A549 (cell line): ENCODE measurements at regions of chr9 and their contacts with region 1.

Region 1: GRCh38 chr9:74952281-74953151 is at the start of gene C9orf40:
- DNase-seq: peak; percentile 71 to 91
- ATAC-seq: peak; percentile 95 to 96
- H3K4me3 ChIP-seq: peak within 1 kb of the TSS; percentile 90
- H3K27ac ChIP-seq: peak within 1 kb of the TSS; percentile 92 to 95
- H3K4me1 ChIP-seq: 0 out of 3 replicates have a peak, but pooled peaks cover 4% of the 10 kb centered on the region
- CTCF ChIP-seq: peak; percentile 76
- EP300 ChIP-seq: no peak
- POLR2A ChIP-seq: peak; percentile 33
- RAD21 ChIP-seq: peak; percentile 34 to 52; a peak in 3 of 5 replicates
- polyA plus RNA-seq, gene C9orf40: 4.0 and 8.8 TPM in 2 replicates

Region 2: DNA sequence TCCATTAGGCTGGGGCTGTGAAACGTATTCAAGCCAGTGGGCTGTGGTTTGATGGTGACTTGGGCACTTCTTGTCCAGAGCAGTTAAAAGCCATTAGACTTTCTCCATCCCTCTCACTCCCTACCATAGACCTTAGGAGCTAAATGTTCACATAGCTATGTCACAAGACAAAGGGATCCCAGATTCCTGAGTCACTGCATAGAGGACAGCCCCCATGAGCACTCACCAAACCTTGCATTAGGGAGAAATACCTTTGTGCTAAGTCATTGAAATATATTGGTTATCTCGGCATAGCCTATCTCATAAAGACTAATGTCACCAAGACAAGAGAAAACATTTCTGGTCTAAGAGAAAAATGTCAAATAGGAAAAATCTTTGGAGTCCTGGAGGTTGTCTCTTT is 169.1 kb before region 1 on chr9:
- CTCF ChIA-PET with region 1: interaction called, 200 read pairs
- POLR2A ChIA-PET with region 1: interaction called, 6 read pairs
- DNase-seq: peak; percentile 48 to 53
- ATAC-seq: peak; percentile 89 to 95
- H3K4me3 ChIP-seq: no peak overlapping the region
- H3K27ac ChIP-seq: peak overlapping the region; percentile 36 to 44; a peak in 2 of 6 replicates
- H3K4me1 ChIP-seq: peaks cover 11% of the 10 kb centered on the region; the same call in 2 of the 3 replicates
- CTCF ChIP-seq: no peak
- EP300 ChIP-seq: no peak
- POLR2A ChIP-seq: no peak
- RAD21 ChIP-seq: no peak

Region 3: DNA sequence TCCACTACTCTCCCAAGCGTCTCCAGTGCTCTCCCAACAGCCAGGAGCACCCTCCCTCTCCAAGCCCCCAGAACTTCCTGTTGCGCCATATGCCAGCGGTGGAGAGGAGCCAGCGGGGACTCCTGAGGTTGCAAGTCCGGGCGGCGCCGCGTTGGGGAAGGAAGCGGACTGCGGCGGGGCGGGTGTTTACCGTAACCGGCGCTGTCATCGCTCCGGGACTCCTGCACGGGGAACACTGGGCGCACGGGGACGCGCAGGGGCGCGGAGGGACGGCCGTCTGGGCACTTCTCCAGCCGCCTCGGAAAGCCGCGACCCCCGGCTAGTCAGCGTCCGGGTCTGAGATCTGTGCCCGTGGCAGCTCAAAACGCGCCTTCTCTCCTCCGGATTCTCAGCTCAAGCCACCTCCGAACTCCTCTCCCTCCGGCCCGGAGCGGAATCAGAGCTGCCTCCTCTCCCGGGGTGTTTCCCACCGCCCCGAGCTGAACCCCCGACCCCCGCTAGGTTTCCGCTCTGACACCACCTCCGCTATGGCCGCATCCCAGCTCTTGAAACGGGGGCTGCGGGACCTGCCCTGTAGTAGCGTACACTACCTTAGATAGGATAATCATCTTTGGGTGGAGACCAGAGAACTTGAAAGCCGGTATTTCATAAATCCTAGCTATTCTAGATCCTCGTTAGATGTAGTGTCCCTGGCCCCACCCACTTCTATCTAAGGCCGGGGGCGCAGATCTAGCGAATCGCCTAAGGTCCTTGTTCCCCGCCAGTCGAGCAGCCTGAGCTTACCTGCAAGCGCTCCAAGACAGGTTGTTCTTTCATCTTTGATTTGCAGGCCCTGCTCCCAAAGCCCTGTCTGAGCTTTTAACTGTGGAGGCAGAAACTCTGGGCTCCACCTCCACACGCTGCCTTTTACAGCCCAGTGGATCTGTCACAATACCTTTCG is 65.2 kb before region 1 on chr9 and contains the start of gene TRPM6:
- CTCF ChIA-PET with region 1: interaction called, 10 read pairs
- POLR2A ChIA-PET with region 1: no interaction called
- DNase-seq: peak; percentile 35 to 77
- ATAC-seq: peak; percentile 91 to 94
- H3K4me3 ChIP-seq: peak within 1 kb of the TSS; percentile 53
- H3K27ac ChIP-seq: peak within 1 kb of the TSS; percentile 69 to 88
- H3K4me1 ChIP-seq: 0 out of 3 replicates have a peak, but pooled peaks cover 6% of the 10 kb centered on the region
- CTCF ChIP-seq: no peak
- EP300 ChIP-seq: no peak
- POLR2A ChIP-seq: 0 out of 2 replicates have a peak, but pooled peaks have one; percentile 6
- RAD21 ChIP-seq: no peak
- polyA plus RNA-seq, gene TRPM6: 2.1 and 2.2 TPM in 2 replicates

Region 4: GRCh38 chr9:74940600-74940999 is 11.9 kb before region 1 on chr9:
- CTCF ChIA-PET with region 1: interaction called, 17 read pairs
- POLR2A ChIA-PET with region 1: interaction called, 3 read pairs
- DNase-seq: no peak
- ATAC-seq: peak; percentile 30 to 45; a peak in 3 of 6 replicates
- H3K4me3 ChIP-seq: no peak overlapping the region
- H3K27ac ChIP-seq: no peak overlapping the region
- H3K4me1 ChIP-seq: no peaks in the 10 kb centered on the region
- CTCF ChIP-seq: no peak
- EP300 ChIP-seq: no peak
- POLR2A ChIP-seq: no peak
- RAD21 ChIP-seq: no peak

Region 5: GRCh38 chr9:74985041-74985440 is 32.5 kb after region 1 on chr9:
- CTCF ChIA-PET with region 1: interaction called, 12 read pairs
- POLR2A ChIA-PET with region 1: no interaction called
- DNase-seq: no peak
- ATAC-seq: no peak
- H3K4me3 ChIP-seq: no peak overlapping the region
- H3K27ac ChIP-seq: no peak overlapping the region
- H3K4me1 ChIP-seq: no peaks in the 10 kb centered on the region
- CTCF ChIP-seq: no peak
- EP300 ChIP-seq: no peak
- POLR2A ChIP-seq: no peak
- RAD21 ChIP-seq: no peak

Region 6: DNA sequence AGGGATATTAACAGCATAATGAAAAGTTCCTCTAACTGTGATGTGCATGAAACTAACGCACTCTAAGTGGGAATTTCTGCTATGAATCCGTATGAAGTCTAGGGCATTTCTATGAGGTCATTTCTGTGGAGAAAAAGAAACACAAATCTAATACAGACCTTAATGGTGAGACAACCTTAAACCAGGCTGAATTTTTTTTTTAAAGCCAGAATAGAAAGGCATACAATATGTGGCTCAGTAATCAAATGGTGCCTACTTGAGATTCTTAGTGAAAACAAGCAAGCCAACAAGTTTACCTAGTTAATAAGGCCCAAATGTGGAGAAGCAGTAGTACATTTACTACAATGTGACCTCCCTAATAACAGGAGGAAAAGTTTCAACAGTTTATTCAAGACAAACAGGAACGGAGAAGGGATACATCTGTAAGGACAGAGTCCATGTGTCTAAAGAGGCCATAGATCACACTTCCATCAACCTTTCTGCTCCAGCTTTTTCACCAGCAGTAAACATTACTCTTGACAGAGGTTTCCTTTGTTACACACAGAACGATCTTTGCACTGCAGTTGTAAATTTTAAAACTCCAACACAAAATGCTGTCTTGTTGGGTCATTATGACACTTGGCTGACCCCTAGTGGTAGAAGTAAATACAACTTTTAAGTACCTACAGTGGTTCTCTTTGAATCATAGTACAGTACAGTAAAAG is 49.4 kb after region 1 on chr9:
- CTCF ChIA-PET with region 1: interaction called, 59 read pairs
- POLR2A ChIA-PET with region 1: no interaction called
- DNase-seq: peak; percentile 21 to 86
- ATAC-seq: peak; percentile 97 to 98
- H3K4me3 ChIP-seq: no peak overlapping the region
- H3K27ac ChIP-seq: no peak overlapping the region
- H3K4me1 ChIP-seq: no peaks in the 10 kb centered on the region
- CTCF ChIP-seq: peak; percentile 94
- EP300 ChIP-seq: no peak
- POLR2A ChIP-seq: no peak
- RAD21 ChIP-seq: peak; percentile 80 to 88

Region 7: DNA sequence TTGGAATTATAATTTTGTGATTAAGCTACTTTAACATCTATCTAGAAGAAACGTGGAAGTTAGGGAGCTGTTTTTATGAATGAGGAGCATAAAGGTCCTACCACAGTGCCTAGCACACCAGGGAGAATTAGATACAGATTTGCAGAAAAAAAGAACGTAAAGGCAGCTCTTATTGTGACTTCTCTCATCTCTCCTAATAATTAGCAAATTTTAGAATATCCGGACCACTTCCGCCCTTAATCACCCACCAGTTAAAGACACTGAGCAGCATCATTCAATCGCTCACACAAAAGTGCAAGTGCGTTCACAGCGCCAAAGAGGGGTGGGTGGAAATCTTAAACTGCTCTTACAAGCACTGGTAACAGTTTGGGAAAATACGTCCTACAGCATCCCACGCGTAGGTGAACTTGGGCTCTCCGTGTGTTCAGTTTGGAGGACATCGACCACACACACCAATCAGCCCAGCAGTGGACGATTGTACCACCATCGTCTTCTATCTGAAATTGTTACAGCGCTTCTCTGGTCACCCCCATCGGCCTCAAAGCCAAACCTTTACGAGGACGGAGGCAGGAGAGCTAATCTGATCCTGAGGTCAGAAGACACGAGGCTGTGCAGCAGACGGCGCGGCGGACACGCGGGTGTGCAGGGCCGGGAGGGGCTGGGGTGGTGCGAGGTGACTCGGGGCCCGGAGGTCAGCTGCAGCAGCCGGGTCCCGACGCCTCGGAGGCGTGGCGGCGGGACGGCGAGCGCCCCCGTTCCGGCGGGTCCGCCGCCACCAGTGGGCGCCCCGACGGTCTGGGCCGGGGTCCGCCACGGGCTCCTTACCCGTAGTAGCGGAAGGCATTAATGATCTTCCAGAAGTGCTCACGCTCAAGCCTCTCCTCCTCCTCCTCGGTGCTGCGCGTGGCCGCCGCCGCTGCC is 74.9 kb after region 1 on chr9:
- CTCF ChIA-PET with region 1: interaction called, 34 read pairs
- POLR2A ChIA-PET with region 1: interaction called, 13 read pairs
- DNase-seq: peak; percentile 58 to 61
- ATAC-seq: peak; percentile 81 to 83
- H3K4me3 ChIP-seq: peak overlapping the region; percentile 84
- H3K27ac ChIP-seq: peak overlapping the region; percentile 99
- H3K4me1 ChIP-seq: peaks cover 15% of the 10 kb centered on the region; the same call in 2 of the 3 replicates
- CTCF ChIP-seq: no peak; the same call in 1 of the 3 replicates
- EP300 ChIP-seq: no peak
- POLR2A ChIP-seq: no peak
- RAD21 ChIP-seq: no peak

Region 8: DNA sequence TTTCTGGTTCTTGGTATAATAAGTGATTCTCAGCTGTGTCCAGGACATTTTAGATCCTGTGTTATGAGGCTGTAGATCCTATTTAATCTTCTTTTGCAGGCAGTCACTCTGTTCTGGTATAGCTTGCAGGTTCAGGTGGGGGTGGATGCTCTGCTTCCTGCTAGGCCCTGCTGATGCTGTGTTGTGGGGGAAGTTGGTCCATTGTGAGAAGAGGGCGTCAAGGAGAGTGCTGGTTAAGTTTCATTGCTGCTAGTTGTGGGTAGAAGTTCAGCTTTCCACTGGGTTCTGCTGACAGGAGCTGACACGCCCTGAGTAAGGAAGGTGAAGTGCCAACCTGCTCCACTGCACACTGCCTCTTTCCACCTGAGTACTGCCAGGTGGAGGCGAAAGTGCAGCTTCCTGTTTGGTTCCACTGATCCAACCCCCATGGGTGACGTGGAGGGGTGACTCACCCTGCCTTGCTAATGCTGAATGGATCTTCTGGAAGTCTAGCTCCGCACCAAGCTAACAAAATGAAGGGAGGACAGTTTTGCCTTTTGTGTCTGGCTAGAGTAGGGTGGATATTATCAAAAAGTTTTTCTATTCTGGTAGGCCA is 119.1 kb after region 1 on chr9:
- CTCF ChIA-PET with region 1: no interaction called
- POLR2A ChIA-PET with region 1: no interaction called
- DNase-seq: no peak
- ATAC-seq: no peak
- H3K4me3 ChIP-seq: no peak overlapping the region
- H3K27ac ChIP-seq: no peak overlapping the region
- H3K4me1 ChIP-seq: no peaks in the 10 kb centered on the region
- CTCF ChIP-seq: no peak
- EP300 ChIP-seq: no peak
- POLR2A ChIP-seq: no peak
- RAD21 ChIP-seq: no peak